Right ventricle myocardium superior (tissue), 1 donor: ENCODE measurements at regions of chr18 and their contacts with region 1.

Region 1: GRCh38 chr18:32349728-32350395 is 120.8 kb downstream of the GAREM1 start:
- DNase-seq: peak; percentile 48
- ATAC-seq: peak; percentile 76

Region 2: GRCh38 chr18:31931163-31931885 is 418.5 kb before region 1 on chr18:
- intact Hi-C with region 1: no loop called
- DNase-seq: no peak
- ATAC-seq: no peak

Region 3: GRCh38 chr18:32289483-32290075 is 60.3 kb before region 1 on chr18:
- intact Hi-C with region 1: loop called (anchors 10 kb)
- DNase-seq: no peak
- ATAC-seq: peak; percentile 77

Region 4: DNA sequence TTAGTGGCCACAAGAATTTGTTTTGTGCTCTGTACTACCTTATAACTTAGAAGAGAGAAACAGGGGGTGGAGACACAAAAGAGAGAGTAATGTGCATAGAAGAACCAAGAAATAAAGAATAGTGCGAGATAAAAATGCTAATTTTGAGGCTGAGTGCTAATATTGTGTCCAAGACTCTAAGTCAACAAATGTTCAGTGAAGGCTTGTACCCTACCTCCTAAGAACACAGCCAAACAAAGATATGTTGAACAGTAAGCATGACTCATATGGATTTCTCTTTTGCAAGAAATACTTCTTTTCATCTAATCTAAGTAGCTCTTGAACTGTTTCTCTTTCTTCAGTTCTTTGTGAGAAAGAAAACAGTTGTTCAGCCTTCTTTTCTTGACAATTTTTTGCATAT is 75.6 kb after region 1 on chr18:
- intact Hi-C with region 1: loop called (anchors 10 kb)
- DNase-seq: no peak
- ATAC-seq: peak; percentile 5